Activated CD4-positive, alpha-beta memory T cell treated with anti-CD3 and anti-CD28 coated beads for 36 hours (primary cell): ENCODE measurements at regions of chr4 and their contacts with region 1.

Region 1: GRCh38 chr4:163332500-163333406 is at the start of gene NPY1R:
- DNase-seq: peak; percentile 60
- H3K4me3 Mint-ChIP-seq: peak within 1 kb of the TSS; percentile 46
- H3K27ac Mint-ChIP-seq: no peak within 1 kb of the TSS
- H3K4me1 Mint-ChIP-seq: peaks cover 14% of the 10 kb centered on the region
- H3K27me3 Mint-ChIP-seq: peaks cover 41% of the 10 kb centered on the region
- total RNA-seq, gene NPY1R: not detected

Region 2: GRCh38 chr4:162497564-162498167 is 835.1 kb before region 1 on chr4:
- CTCF ChIA-PET with region 1: interaction called, 18 read pairs
- POLR2A ChIA-PET with region 1: no interaction called
- intact Hi-C with region 1: no loop called
- DNase-seq: no peak
- H3K4me3 Mint-ChIP-seq: no peak overlapping the region
- H3K27ac Mint-ChIP-seq: no peak overlapping the region
- H3K4me1 Mint-ChIP-seq: no peaks in the 10 kb centered on the region
- H3K27me3 Mint-ChIP-seq: peaks cover 2% of the 10 kb centered on the region

Region 3: DNA sequence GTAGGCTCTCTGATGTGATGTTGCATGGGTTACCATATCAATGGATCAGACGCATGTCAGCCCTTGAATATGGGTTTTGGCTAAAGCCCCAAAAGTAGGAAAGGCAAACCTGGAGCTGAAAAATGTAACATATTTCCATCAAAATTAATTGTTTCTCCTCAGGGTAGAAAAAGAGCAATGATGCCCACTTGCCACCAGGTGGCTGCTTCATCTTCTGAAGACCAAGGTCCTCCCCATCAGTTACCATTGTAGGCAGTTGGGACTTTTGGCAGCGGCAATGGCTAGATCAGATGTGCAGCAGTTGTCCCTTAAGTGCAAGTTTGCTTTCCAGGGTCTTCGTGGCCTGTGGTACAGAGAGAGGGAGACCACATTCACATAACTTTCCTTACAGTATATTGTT is 284.3 kb before region 1 on chr4:
- CTCF ChIA-PET with region 1: no interaction called
- POLR2A ChIA-PET with region 1: no interaction called
- intact Hi-C with region 1: loop called (anchors 5 kb)
- DNase-seq: peak; percentile 13
- H3K4me3 Mint-ChIP-seq: no peak overlapping the region
- H3K27ac Mint-ChIP-seq: no peak overlapping the region
- H3K4me1 Mint-ChIP-seq: no peaks in the 10 kb centered on the region
- H3K27me3 Mint-ChIP-seq: peaks cover 2% of the 10 kb centered on the region

Region 4: DNA sequence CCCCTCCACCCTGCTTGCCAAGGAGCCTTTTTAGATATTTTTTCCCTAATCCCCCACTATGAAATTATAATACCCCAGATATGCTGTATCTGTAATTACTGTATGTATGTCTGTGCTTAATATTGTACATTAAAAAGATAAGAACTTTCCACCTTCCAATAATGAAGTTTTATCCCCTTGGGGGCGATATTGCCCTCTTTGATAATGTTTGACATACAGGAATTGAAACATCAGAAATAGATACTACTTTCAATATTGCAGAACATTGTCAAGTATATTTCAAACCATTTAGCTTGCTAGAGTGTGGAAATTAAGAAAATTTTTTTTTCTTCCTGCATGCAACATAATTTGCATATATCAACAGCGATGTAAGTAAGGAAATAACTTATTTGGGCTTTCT is 225.0 kb before region 1 on chr4:
- CTCF ChIA-PET with region 1: interaction called, 3 read pairs
- POLR2A ChIA-PET with region 1: no interaction called
- intact Hi-C with region 1: loop called (anchors 10 kb)
- DNase-seq: no peak
- H3K4me3 Mint-ChIP-seq: no peak overlapping the region
- H3K27ac Mint-ChIP-seq: no peak overlapping the region
- H3K4me1 Mint-ChIP-seq: peaks cover 8% of the 10 kb centered on the region
- H3K27me3 Mint-ChIP-seq: no peaks in the 10 kb centered on the region

Region 5: GRCh38 chr4:163166041-163166579 is 166.6 kb before region 1 on chr4:
- CTCF ChIA-PET with region 1: no interaction called
- POLR2A ChIA-PET with region 1: no interaction called
- intact Hi-C with region 1: loop called (anchors 5 kb)
- DNase-seq: peak; percentile 71
- H3K4me3 Mint-ChIP-seq: peak overlapping the region; percentile 75
- H3K27ac Mint-ChIP-seq: peak overlapping the region; percentile 93
- H3K4me1 Mint-ChIP-seq: peaks cover 41% of the 10 kb centered on the region
- H3K27me3 Mint-ChIP-seq: no peaks in the 10 kb centered on the region